Breast epithelium (tissue), 4 donors: ENCODE measurements at regions of chr22 and their contacts with region 1.

Region 1: GRCh38 chr22:34997633-34998299 is 68.2 kb upstream of the ISX start:
- DNase-seq: no peak
- H3K4me3 ChIP-seq: no peak overlapping the region
- H3K27ac ChIP-seq: no peak overlapping the region
- H3K4me1 ChIP-seq: no peaks in the 10 kb centered on the region
- H3K27me3 ChIP-seq: peaks cover 0 to 9% of the 10 kb centered on the region in 2 donors
- CTCF ChIP-seq: no peak
- POLR2A ChIP-seq: no peak

Region 2: DNA sequence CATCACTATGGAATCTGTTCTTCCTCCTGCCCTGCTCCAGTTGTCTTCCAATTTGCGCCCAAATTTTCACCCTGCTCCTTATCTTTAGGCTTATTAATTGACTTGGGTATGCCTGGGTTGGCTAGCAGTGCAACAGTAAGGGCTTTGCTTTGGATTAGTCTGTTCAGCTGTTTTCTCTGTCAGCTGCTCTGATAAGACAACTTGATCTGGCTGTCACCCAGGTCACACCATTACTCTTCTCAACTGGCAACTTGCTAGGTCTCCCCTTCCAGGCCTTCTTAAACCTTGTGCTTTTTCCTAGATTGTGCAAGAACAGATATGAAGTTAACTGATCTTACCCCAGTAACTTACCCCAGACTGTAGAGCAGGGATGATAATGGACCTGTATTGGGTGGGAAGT is 719.6 kb before region 1 on chr22:
- intact Hi-C with region 1: loop called (anchors 5 kb)
- DNase-seq: no peak
- H3K4me3 ChIP-seq: no peak overlapping the region
- H3K27ac ChIP-seq: no peak overlapping the region
- H3K4me1 ChIP-seq: no peaks in the 10 kb centered on the region
- H3K27me3 ChIP-seq: no peaks in the 10 kb centered on the region
- CTCF ChIP-seq: no peak
- POLR2A ChIP-seq: no peak

Region 3: GRCh38 chr22:34427431-34427830 is 570.3 kb before region 1 on chr22:
- intact Hi-C with region 1: no loop called
- DNase-seq: no peak
- H3K4me3 ChIP-seq: no peak overlapping the region
- H3K27ac ChIP-seq: no peak overlapping the region
- H3K4me1 ChIP-seq: no peaks in the 10 kb centered on the region
- H3K27me3 ChIP-seq: peaks cover 0 to 10% of the 10 kb centered on the region in 2 donors
- CTCF ChIP-seq: no peak
- POLR2A ChIP-seq: no peak